Cardiac septum (tissue), 1 donor: ENCODE measurements at regions of chr7 and their contacts with region 1.

Region 1: DNA sequence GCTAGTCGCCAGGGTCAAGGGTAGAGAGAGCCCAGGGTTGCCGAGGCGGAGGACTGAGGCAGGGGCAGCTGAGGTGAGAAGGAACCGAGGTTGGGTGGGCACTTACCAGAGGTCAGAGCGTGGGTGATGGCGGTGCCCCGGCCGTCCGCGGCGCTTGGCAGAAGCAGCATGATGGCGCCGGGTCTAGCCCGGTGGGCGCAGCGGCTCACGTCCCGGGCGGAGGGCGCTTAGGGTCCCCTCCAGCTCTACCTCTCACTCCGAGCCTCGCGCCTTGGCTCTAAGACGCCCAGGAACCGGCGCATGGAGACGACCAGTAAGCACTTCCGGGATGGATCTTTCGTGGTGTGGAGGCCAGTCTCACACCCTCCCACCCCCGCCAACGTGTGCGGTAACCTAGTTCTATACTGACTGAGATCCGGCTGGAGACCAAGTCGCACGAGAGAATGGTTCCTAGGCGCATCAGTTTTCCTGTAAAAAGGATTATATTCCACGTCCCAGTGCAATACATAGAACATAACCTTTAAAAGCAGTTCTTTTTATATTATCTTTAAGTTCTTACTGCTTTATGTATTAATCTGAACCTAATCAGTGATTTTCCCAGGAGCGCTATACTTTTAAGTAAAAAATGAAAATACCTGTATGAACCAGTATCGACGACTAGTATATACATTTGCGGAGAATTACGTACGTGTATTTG is at the start of gene DNAJC2:
- DNase-seq: peak; percentile 91
- total RNA-seq, gene DNAJC2: 17.7 TPM

Region 2: GRCh38 chr7:103296901-103297836 is 47.4 kb before region 1 on chr7 and contains the start of gene PMPCB:
- intact Hi-C with region 1: loop called (anchors 5 kb)
- DNase-seq: peak; percentile 97
- total RNA-seq, gene PMPCB: 68.2 TPM

Region 3: DNA sequence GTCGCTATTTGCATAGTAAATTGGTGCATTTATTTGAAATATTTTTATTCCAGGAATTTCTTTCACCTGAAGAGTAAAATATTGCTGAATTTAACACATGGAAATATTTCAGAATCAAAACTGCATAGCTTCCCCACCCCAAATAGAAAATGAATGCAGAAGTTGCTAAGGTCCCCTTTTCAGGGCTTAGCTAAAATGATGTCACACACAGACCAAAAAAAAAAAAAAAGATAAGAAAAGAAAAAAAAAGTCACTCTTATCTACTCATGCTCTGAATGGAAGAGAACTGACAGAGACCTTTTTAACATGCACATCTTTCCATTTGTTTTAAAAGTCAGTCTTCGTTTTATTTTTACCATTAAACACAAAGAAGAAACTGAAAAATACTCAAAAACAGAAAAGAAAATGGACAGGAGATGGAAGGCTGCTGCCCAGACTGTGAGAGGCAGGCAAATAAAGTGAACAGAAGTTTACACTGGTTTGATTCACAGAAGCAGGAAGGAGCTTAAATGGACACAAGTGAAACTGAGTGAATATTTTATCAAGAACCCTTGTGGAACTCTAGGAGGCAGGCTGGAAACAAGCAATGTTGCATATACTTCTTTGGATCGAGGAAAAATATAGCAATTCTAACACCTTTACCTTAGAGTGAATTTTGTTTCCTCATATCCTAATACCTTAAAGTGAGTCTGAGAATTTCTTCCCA is 34.8 kb after region 1 on chr7:
- intact Hi-C with region 1: no loop called
- DNase-seq: no peak